Gastrocnemius medialis (tissue), 4 donors: ENCODE measurements at regions of chr11 and their contacts with region 1.

Region 1: DNA sequence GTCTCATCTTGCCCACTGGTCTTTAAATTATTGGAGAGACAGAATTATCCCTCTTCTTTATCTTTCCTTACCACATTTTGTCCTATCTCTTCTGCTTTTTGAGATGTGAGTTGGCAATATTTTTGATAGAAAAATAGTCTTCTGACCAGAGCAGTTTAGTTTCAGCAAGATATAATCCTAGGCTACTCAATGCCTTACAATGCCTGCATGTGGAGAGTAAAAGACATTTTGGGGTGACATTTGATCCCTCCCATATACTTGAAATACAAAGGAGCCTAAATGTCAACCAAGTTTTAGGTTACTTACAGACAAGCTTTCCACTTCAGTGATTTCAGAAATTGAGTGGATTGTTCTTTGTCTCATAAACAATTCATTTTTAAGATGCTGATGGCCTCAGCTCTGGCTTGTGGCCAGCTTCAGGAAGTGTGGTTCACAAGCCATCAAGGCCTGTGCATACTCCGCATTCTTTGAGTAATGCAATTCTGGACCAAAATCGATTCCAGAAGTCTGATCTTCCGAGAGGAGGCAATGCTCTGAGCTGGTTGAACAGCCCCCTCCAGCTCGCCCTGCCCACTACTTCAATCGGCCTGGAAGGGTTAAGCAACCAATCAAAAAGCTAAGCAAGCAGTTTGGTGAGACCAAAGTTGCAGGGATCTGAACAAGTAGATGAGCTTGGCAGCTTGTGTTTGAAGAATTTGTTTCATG is 274.4 kb downstream of the BLID start:
- DNase-seq: no peak
- ATAC-seq: no peak
- H3K4me3 ChIP-seq: no peak overlapping the region
- H3K27ac ChIP-seq: no peak overlapping the region
- H3K4me1 ChIP-seq: no peaks in the 10 kb centered on the region
- H3K27me3 ChIP-seq: no peaks in the 10 kb centered on the region
- CTCF ChIP-seq: no peak
- POLR2A ChIP-seq: no peak

Region 2: DNA sequence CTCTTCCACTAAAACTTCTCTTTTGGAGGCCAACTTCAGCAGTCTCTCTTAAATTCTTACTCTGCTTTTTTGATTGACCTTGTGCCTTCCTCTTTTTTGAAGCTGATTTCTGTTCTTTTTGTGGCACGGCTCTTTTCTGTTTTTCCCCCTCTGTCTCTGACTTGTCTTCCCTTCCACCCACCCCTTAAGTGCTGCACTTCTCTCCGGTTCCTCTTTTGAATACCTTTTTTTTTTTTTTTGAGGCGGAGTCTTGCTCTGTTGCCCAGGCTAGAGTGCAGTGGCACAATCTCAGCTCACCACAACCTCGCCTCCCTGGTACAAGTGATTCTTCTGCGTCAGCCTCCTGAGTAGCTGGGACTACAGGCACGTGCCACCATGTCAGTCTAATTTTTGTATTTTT is 62.5 kb after region 1 on chr11:
- in situ Hi-C with region 1: loop called in 1 of 4 experiments (anchors 10 kb)
- intact Hi-C with region 1: no loop called
- DNase-seq: peak in 1 of 2 donors; percentile 15
- ATAC-seq: no peak
- H3K4me3 ChIP-seq: no peak overlapping the region
- H3K27ac ChIP-seq: no peak overlapping the region
- H3K4me1 ChIP-seq: no peaks in the 10 kb centered on the region
- H3K27me3 ChIP-seq: no peaks in the 10 kb centered on the region
- CTCF ChIP-seq: no peak
- POLR2A ChIP-seq: no peak